ENCODE measurements at regions of chr12 and their contacts with region 1.

Region 1: DNA sequence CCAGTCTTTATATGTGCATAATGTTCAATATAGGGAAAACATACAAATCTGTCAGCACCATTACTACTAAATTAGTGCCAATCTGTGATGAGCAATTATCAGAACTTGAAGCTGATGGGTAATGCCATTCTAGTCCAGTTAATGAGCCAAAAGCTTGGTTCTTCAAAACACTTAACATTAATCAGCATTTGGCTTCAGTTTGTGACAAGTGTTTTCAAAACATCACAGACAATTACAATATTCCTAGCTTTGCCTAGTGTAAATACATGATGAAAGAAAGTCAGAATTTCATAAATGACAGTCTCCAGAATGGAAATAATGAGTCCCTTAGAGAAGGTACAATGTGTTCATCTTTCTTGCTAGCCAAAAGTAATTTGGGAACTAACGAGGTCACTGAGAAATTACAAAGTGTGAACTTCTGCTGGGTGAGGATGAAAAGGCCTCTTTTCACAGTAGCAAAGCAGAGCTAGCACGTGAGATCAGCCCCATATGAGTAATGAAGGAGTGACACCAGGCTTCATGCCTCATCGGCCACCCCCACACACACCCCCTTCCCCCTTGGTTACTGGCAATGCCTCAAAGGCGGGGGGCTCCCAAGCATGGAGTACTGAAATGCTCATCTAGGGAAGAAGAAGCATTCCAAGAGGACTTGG is 180.6 kb upstream of the EEA1 start:
- DNase-seq: peak; percentile 75
- ATAC-seq: peak; percentile 93
- H3K4me3 Mint-ChIP-seq: no peak overlapping the region
- H3K27ac Mint-ChIP-seq: peak overlapping the region; percentile 89
- H3K4me1 Mint-ChIP-seq: peaks cover 26% of the 10 kb centered on the region
- H3K27me3 Mint-ChIP-seq: no peaks in the 10 kb centered on the region

Region 2: DNA sequence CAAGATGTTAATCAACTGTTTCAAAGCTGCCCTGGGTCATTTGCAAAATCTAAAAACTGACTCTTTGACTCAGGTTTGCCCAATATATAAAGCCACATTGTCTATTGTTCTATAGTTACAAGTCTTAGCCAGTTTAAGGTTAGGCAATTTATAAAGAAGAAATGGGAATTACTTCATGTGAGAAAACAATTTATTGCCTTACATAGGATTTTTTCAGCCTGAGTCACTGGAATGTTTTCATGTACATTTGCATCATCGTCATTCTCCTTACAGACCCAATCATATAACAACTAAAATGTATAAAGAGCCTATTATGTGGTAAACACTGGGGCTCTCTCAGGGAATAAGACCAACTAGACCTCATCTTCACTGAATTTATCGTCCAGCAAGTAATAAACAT is 507.2 kb before region 1 on chr12:
- CTCF ChIA-PET with region 1: no interaction called
- POLR2A ChIA-PET with region 1: no interaction called
- intact Hi-C with region 1: no loop called
- DNase-seq: no peak
- ATAC-seq: no peak
- H3K4me3 Mint-ChIP-seq: no peak overlapping the region
- H3K27ac Mint-ChIP-seq: peak overlapping the region; percentile 87
- H3K4me1 Mint-ChIP-seq: peaks cover 47% of the 10 kb centered on the region
- H3K27me3 Mint-ChIP-seq: no peaks in the 10 kb centered on the region

Region 3: GRCh38 chr12:93387780-93388179 is 278.1 kb after region 1 on chr12:
- CTCF ChIA-PET with region 1: no interaction called
- POLR2A ChIA-PET with region 1: interaction called, 3 read pairs
- intact Hi-C with region 1: loop called in 1 of 2 experiments (anchors 2 kb)
- DNase-seq: peak; percentile 74
- ATAC-seq: peak; percentile 89
- H3K4me3 Mint-ChIP-seq: no peak overlapping the region
- H3K27ac Mint-ChIP-seq: peak overlapping the region; percentile 53
- H3K4me1 Mint-ChIP-seq: peaks cover 62% of the 10 kb centered on the region
- H3K27me3 Mint-ChIP-seq: no peaks in the 10 kb centered on the region

Region 4: DNA sequence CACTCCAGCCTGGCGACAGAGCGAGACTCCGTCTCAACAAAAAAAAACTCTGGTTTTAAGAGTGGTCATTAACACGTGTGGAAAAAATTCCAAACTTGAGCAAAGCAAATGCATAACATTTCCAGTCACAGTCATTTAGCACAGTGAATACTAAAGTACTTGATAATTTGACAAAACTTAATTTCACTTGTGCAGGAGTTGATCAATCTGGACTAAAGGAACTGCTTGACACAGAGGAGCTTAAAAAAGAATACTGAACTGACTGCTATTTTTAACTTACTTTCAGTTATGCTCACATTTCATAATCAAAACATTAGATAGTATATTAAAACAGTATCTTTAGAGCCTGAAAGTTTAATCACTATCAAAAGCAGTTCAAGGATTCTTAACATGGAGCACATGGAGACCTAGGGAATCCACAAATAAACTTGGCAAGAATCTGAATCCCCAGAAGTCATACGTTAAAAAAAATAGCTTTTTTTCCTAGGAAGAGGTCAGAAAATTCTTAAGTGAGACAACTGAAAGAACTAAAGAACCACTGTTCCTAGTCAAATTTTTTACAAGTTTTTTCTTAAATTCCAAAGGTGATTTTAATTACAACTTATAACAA is 324.7 kb after region 1 on chr12:
- CTCF ChIA-PET with region 1: no interaction called
- POLR2A ChIA-PET with region 1: no interaction called
- intact Hi-C with region 1: no loop called
- DNase-seq: no peak
- ATAC-seq: no peak
- H3K4me3 Mint-ChIP-seq: no peak overlapping the region
- H3K27ac Mint-ChIP-seq: no peak overlapping the region
- H3K4me1 Mint-ChIP-seq: peaks cover 80% of the 10 kb centered on the region
- H3K27me3 Mint-ChIP-seq: no peaks in the 10 kb centered on the region

Measured in activated CD4-positive, alpha-beta T cell treated with anti-CD3 and anti-CD28 coated beads for 36 hours (primary cell).